Endothelial cell of umbilical vein (primary cell): ENCODE measurements at regions of chr10 and their contacts with region 1.

Region 1: DNA sequence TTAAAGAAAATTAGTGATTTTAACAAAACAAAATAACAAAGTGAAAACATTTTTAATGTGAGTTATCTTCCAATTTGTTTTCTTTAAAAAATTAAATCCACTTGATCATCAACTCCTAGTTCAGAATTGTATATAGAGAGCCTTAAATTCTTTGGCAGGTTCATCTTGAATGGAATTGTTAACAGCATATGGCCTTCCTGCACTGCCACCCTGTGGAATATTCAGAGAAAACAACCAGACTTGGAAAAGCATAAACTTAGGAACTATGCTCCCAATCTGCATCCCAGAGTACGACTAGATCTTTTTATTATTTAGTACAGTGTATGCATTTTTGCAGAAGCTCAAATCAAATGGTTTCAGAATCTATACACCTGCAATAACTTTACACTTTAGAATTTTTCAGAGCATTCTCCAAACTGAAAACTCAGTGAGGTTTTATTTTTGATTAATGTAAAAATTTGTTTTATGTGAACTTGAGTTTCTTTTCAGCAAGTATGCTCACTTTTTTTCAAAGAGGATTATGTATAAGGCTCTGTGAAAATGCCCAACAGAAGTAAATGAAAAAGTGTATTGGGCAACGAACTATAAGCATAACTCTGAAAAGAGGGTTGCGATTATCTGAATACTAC is 44.9 kb upstream of the ANK3 start:
- DNase-seq: peak; percentile 78
- H3K4me3 ChIP-seq: no peak overlapping the region
- H3K27ac ChIP-seq: no peak overlapping the region
- H3K4me1 ChIP-seq: peaks cover 9% of the 10 kb centered on the region
- H3K27me3 ChIP-seq: no peaks in the 10 kb centered on the region
- CTCF ChIP-seq: peak; percentile 38 to 47
- POLR2A ChIP-seq: no peak

Region 2: DNA sequence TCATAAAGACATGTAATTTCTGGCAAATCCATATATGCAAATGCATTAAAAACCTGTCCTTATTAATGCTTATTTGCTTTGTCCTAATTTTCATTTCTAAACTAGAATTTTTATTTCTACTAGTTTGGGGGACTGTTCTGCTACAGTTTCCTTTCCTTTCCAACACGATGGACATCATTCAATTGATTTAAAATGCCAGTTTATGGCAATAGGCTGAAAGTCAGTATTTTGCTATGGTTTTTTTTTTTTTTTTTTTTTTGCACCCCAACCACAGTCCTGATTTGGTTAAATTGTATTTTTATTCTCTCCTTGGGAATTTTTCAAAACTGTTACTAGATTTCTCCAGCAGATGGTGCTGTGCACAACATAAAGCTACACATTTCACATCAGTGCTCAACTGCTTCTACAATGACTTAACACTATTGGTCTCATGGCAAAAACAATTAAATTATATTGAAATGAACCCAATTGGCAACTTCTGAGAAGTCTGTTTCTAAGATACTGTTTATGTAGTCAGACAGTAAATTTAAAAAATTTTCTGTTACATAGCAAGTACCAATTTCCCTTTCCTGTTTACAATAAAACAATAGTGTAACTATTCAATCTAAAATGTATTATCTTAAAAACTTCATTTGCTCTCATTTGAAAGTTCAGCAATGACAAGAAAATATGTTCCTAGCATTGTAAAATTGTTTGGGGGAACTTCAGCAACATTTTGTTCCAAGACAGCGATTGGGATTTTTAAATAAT is 334.4 kb before region 1 on chr10:
- CTCF ChIA-PET with region 1: interaction called, 53 read pairs
- POLR2A ChIA-PET with region 1: no interaction called
- dilution Hi-C with region 1: no loop called
- intact Hi-C with region 1: loop called (anchors 1 kb)
- DNase-seq: peak; percentile 61
- H3K4me3 ChIP-seq: no peak overlapping the region
- H3K27ac ChIP-seq: no peak overlapping the region
- H3K4me1 ChIP-seq: no peaks in the 10 kb centered on the region
- H3K27me3 ChIP-seq: no peaks in the 10 kb centered on the region
- CTCF ChIP-seq: peak; percentile 20 to 40
- POLR2A ChIP-seq: no peak

Region 3: GRCh38 chr10:60114765-60115586 is 319.6 kb before region 1 on chr10:
- CTCF ChIA-PET with region 1: interaction called, 23 read pairs
- POLR2A ChIA-PET with region 1: no interaction called
- dilution Hi-C with region 1: no loop called
- intact Hi-C with region 1: loop called (anchors 1 kb)
- DNase-seq: peak; percentile 69
- H3K4me3 ChIP-seq: no peak overlapping the region
- H3K27ac ChIP-seq: no peak overlapping the region
- H3K4me1 ChIP-seq: no peaks in the 10 kb centered on the region
- H3K27me3 ChIP-seq: no peaks in the 10 kb centered on the region
- CTCF ChIP-seq: peak; percentile 49 to 55
- POLR2A ChIP-seq: no peak

Region 4: DNA sequence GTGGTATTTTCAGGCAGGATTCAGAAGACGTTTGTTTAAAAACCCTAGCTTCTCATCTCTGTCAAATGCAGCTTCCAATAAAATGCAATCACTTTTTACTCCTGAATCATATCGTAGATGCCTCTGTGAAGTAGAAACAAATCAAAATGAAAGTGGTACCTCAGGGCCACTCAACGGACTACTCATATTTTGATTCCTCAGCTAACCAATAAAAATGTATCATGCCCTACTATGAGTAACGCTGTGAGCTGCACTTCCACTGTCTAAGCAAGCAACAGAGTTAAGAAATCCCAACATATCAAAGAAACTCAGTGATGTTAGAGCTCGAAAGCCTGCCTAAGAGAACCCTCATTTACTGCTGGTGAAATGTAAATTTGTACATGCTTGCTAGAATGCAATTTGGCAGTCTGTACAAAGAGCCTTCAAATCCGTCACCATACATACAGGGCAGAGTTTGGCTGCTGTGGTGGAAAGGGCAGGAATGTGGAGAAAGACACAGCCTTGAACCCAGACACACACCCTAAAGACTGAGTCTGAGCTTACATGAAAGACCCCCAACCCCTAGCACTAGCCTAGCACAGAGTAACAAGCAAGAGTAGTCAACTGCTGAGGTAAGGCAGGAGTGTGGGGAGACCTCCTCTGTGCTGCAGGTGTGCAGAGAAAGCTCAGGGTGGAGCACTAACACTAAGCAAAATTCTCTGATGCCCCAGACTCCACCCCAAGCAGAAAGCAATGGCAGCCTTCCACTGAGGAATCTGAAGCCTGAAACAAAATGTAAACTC is 196.4 kb before region 1 on chr10:
- CTCF ChIA-PET with region 1: interaction called, 13 read pairs
- POLR2A ChIA-PET with region 1: no interaction called
- dilution Hi-C with region 1: no loop called
- intact Hi-C with region 1: loop called (anchors 1 kb)
- DNase-seq: no peak
- H3K4me3 ChIP-seq: no peak overlapping the region
- H3K27ac ChIP-seq: no peak overlapping the region
- H3K4me1 ChIP-seq: peaks cover 4% of the 10 kb centered on the region
- H3K27me3 ChIP-seq: no peaks in the 10 kb centered on the region
- CTCF ChIP-seq: peak in 1 of 2 donors; percentile 13
- POLR2A ChIP-seq: no peak

Region 5: GRCh38 chr10:60335708-60336107 is 98.8 kb before region 1 on chr10:
- CTCF ChIA-PET with region 1: interaction called, 9 read pairs
- POLR2A ChIA-PET with region 1: no interaction called
- dilution Hi-C with region 1: no loop called
- intact Hi-C with region 1: loop called (anchors 1 kb)
- DNase-seq: peak; percentile 27
- H3K4me3 ChIP-seq: no peak overlapping the region
- H3K27ac ChIP-seq: no peak overlapping the region
- H3K4me1 ChIP-seq: no peaks in the 10 kb centered on the region
- H3K27me3 ChIP-seq: no peaks in the 10 kb centered on the region
- CTCF ChIP-seq: peak in 1 of 2 donors; percentile 12
- POLR2A ChIP-seq: no peak

Region 6: DNA sequence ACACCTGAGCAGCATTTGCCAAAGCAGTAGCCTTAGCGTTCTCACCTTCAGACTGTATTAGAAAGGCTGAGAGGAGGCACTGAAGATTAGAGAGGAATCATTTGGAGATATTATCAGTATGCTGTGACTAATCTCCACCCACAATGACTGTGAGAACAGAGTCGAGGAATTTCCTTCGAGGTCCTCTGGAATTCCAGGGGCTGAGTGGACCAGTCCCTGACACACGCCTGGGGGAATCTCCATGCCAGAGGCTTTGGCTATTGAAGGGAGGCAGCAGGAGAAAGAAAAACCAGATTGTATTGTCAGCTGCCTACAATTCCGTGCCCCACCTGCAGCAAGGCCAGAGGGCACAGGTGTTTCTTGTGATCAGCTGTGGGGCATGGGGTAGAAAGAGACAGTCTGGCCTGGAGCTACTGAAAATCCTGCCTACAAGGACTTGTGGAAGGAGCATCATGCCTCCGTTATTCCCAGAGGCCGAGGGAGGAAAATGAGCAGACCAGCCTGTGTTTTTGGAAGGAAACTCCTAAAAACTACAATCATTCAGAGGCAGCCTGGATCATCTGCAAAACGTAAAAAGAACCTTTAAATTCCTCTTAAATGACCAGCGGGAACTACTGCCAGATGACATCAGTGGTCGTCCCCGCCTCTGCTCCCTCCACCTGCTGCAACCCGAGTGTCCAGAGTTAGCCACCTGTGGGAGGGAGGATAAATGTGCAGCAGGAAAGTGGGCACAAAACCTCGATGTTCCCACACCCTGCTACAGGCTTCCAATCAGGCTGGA is 19.5 kb before region 1 on chr10:
- CTCF ChIA-PET with region 1: no interaction called
- POLR2A ChIA-PET with region 1: no interaction called
- dilution Hi-C with region 1: no loop called
- intact Hi-C with region 1: loop called (anchors 2 kb)
- DNase-seq: peak; percentile 82
- H3K4me3 ChIP-seq: peak overlapping the region in 1 of 3 experiments; percentile 7
- H3K27ac ChIP-seq: peak overlapping the region; percentile 77
- H3K4me1 ChIP-seq: peaks cover 21% of the 10 kb centered on the region
- H3K27me3 ChIP-seq: no peaks in the 10 kb centered on the region
- CTCF ChIP-seq: no peak
- POLR2A ChIP-seq: no peak

Region 7: GRCh38 chr10:61188691-61189090 is 754.2 kb after region 1 on chr10:
- CTCF ChIA-PET with region 1: no interaction called
- POLR2A ChIA-PET with region 1: no interaction called
- dilution Hi-C with region 1: no loop called
- intact Hi-C with region 1: no loop called
- DNase-seq: no peak
- H3K4me3 ChIP-seq: no peak overlapping the region
- H3K27ac ChIP-seq: no peak overlapping the region
- H3K4me1 ChIP-seq: no peaks in the 10 kb centered on the region
- H3K27me3 ChIP-seq: no peaks in the 10 kb centered on the region
- CTCF ChIP-seq: no peak
- POLR2A ChIP-seq: no peak